ENCODE measurements at regions of chr1 and their contacts with region 1.

Region 1: DNA sequence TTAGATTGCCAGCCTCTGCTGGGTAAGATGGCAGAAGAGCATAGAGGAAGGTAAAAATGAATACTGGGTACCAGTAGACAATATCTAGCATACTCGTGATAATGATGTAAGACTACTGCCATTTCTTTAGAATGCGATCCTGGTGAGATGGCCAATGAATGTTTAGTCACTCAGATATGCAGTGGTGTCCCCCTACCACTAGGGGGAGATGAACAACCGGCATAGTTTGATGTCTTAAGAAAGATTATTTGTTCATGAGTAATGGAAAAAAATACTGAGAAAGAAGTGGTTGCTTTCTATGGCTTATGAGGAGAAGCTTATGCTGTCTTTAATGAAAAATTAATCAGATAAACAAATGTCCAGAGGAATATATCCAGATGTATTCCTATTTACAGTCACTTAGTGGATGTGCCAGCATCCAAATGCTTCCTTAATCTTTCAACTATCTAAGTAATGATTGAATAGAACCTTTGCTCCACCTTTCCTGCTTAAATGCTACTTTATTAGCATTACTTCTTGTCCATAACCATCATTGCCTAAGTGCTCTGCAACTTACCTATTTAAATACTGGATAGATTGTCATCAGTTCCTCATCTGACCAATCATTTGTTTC is 256.6 kb downstream of the ST6GALNAC3 start:
- DNase-seq: no peak
- ATAC-seq: peak in 2 of 4 donors; percentile 28 to 52
- H3K4me3 ChIP-seq: no peak overlapping the region
- H3K27ac ChIP-seq: no peak overlapping the region
- H3K4me1 ChIP-seq: peaks cover 0 to 7% (median 0%) of the 10 kb centered on the region in 12 donors
- H3K27me3 ChIP-seq: no peaks in the 10 kb centered on the region
- CTCF ChIP-seq: peak; percentile 72 to 93 (median 85)
- POLR2A ChIP-seq: no peak

Region 2: GRCh38 chr1:76142771-76143540 is 188.1 kb before region 1 on chr1:
- intact Hi-C with region 1: no loop called
- DNase-seq: no peak
- ATAC-seq: no peak
- H3K4me3 ChIP-seq: no peak overlapping the region
- H3K27ac ChIP-seq: no peak overlapping the region
- H3K4me1 ChIP-seq: peaks cover 0 to 41% (median 8%) of the 10 kb centered on the region in 12 donors
- H3K27me3 ChIP-seq: peaks cover 0 to 2% (median 0%) of the 10 kb centered on the region in 9 donors
- CTCF ChIP-seq: no peak
- POLR2A ChIP-seq: no peak

Region 3: GRCh38 chr1:76425201-76426145 is 94.4 kb after region 1 on chr1:
- intact Hi-C with region 1: no loop called
- DNase-seq: no peak
- ATAC-seq: no peak
- H3K4me3 ChIP-seq: no peak overlapping the region
- H3K27ac ChIP-seq: no peak overlapping the region
- H3K4me1 ChIP-seq: peaks cover 0 to 5% (median 0%) of the 10 kb centered on the region in 12 donors
- H3K27me3 ChIP-seq: no peaks in the 10 kb centered on the region
- CTCF ChIP-seq: no peak
- POLR2A ChIP-seq: no peak

Region 4: DNA sequence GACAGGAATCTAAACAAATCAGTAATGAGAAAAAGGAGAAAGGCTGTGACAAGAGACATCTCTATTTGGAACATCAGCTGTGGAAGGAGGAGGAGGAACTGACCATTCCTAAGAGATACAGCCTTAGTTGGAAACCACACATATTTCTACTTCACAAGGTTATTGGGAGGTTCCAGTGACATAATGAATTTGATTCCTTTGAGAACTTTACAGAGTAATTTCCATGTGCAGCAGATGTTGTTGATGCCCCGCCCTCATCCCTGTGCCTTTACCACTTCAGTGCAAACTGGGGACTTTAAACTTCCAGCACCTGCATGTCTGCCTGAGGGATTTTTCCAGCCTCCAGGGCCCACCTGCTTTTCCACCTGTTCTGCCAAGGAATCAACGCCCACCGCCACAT is 526.9 kb after region 1 on chr1:
- intact Hi-C with region 1: loop called in 1 of 10 experiments (anchors 5 kb)
- DNase-seq: no peak
- ATAC-seq: no peak
- H3K4me3 ChIP-seq: no peak overlapping the region
- H3K27ac ChIP-seq: no peak overlapping the region
- H3K4me1 ChIP-seq: no peaks in the 10 kb centered on the region
- H3K27me3 ChIP-seq: peaks cover 0 to 7% (median 0%) of the 10 kb centered on the region in 9 donors
- CTCF ChIP-seq: no peak
- POLR2A ChIP-seq: no peak

Region 5: DNA sequence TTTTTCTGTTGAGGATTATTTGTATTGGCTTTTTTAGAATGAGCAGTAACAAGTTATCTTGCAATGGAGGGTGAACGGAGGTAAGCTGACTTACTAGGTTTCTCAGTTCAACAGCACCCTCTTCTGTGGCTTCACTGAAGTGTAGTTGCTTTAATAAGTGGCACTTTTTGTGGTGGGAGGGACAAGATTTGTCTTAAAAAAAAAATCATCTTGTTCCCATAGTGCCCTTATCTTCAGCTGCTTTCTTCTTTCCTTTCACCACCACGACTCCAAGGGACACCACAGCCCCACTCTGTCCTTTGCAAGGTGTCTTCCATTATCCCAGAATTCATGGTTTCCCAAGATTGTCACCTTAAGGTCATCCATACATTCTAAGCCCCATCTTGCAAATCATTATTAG is 795.2 kb after region 1 on chr1:
- intact Hi-C with region 1: loop called in 7 of 10 experiments (anchors 5 to 10 kb)
- DNase-seq: no peak
- ATAC-seq: peak in 3 of 4 donors; percentile 61 to 66 (median 65)
- H3K4me3 ChIP-seq: no peak overlapping the region
- H3K27ac ChIP-seq: no peak overlapping the region
- H3K4me1 ChIP-seq: no peaks in the 10 kb centered on the region
- H3K27me3 ChIP-seq: no peaks in the 10 kb centered on the region
- CTCF ChIP-seq: peak in 11 of 12 donors; percentile 19 to 57 (median 40)
- POLR2A ChIP-seq: no peak

Region 6: GRCh38 chr1:77134359-77134758 is 803.3 kb after region 1 on chr1:
- intact Hi-C with region 1: loop called in 7 of 10 experiments (anchors 5 to 10 kb)
- DNase-seq: no peak
- ATAC-seq: no peak
- H3K4me3 ChIP-seq: no peak overlapping the region
- H3K27ac ChIP-seq: no peak overlapping the region
- H3K4me1 ChIP-seq: peaks cover 0 to 7% (median 0%) of the 10 kb centered on the region in 12 donors
- H3K27me3 ChIP-seq: no peaks in the 10 kb centered on the region
- CTCF ChIP-seq: no peak
- POLR2A ChIP-seq: no peak